ENCODE measurements at regions of chrX and their contacts with region 1.

Region 1: GRCh38 chrX:55187281-55187680 is 32.9 kb upstream of the PAGE5 start:
- DNase-seq: no peak
- H3K4me3 ChIP-seq: no peak overlapping the region
- H3K27ac ChIP-seq: no peak overlapping the region
- H3K4me1 ChIP-seq: no peaks in the 10 kb centered on the region
- H3K27me3 ChIP-seq: peaks cover 0 to 3% of the 10 kb centered on the region in 2 donors
- CTCF ChIP-seq: no peak
- POLR2A ChIP-seq: no peak

Region 2: DNA sequence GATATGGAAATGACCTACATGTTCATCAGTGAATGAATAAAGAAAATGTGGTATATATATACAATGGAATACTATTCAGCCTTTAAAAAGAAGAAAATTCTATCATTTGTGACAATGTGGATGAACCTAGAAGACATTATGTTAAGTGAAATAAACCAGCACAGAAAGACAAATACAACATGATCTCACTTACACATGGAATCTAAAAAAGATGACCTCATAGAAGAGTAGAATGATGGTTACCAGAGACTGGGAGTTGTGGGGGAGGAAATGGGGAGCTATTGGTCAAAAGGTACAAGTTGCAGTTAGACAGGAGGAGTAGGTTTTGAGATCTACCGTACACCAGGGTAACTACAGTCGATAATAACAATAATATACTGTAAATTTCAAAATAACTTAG is 880.9 kb before region 1 on chrX:
- intact Hi-C with region 1: no loop called
- DNase-seq: no peak
- H3K4me3 ChIP-seq: no peak overlapping the region
- H3K27ac ChIP-seq: no peak overlapping the region
- H3K4me1 ChIP-seq: no peaks in the 10 kb centered on the region
- H3K27me3 ChIP-seq: peaks cover 0 to 24% of the 10 kb centered on the region in 2 donors
- CTCF ChIP-seq: no peak
- POLR2A ChIP-seq: no peak

Region 3: GRCh38 chrX:54509400-54509799 is 677.9 kb before region 1 on chrX:
- intact Hi-C with region 1: loop called (anchors 5 kb)
- DNase-seq: no peak
- H3K4me3 ChIP-seq: no peak overlapping the region
- H3K27ac ChIP-seq: no peak overlapping the region
- H3K4me1 ChIP-seq: no peaks in the 10 kb centered on the region
- H3K27me3 ChIP-seq: peaks cover 0 to 15% of the 10 kb centered on the region in 2 donors
- CTCF ChIP-seq: no peak
- POLR2A ChIP-seq: no peak

Region 4: DNA sequence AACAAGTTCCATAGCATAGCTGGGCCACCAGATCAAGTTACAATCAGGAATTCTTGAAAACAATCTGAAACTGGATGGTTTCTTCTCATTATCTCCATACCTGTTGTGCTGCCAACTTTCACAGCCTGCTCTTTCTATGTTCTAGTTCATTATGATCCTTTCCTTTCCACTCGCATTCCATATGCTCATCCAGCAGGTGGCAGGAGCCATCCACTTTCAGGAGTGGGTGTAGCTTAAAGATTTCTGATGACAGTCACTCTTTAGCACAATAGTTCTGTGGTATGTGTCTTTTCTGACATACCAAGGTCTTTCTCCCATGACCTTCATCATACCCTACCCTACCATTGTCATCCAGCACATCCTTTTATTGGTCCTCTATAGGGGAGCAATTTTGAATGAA is 52.1 kb before region 1 on chrX:
- intact Hi-C with region 1: no loop called
- DNase-seq: peak in 1 of 2 donors; percentile 19
- H3K4me3 ChIP-seq: no peak overlapping the region
- H3K27ac ChIP-seq: no peak overlapping the region
- H3K4me1 ChIP-seq: no peaks in the 10 kb centered on the region
- H3K27me3 ChIP-seq: peaks cover 0 to 57% of the 10 kb centered on the region in 2 donors
- CTCF ChIP-seq: peak in 2 of 3 donors; percentile 31 to 52
- POLR2A ChIP-seq: no peak

Region 5: GRCh38 chrX:55758033-55758432 is 570.8 kb after region 1 on chrX:
- intact Hi-C with region 1: no loop called
- DNase-seq: no peak
- H3K4me3 ChIP-seq: no peak overlapping the region
- H3K27ac ChIP-seq: no peak overlapping the region
- H3K4me1 ChIP-seq: no peaks in the 10 kb centered on the region
- H3K27me3 ChIP-seq: peaks cover 0 to 6% of the 10 kb centered on the region in 2 donors
- CTCF ChIP-seq: no peak
- POLR2A ChIP-seq: no peak

Region 6: GRCh38 chrX:56530011-56530410 is 1342.7 kb after region 1 on chrX:
- intact Hi-C with region 1: no loop called
- DNase-seq: no peak
- H3K4me3 ChIP-seq: no peak overlapping the region
- H3K27ac ChIP-seq: no peak overlapping the region
- H3K4me1 ChIP-seq: no peaks in the 10 kb centered on the region
- H3K27me3 ChIP-seq: peaks cover 0 to 22% of the 10 kb centered on the region in 2 donors
- CTCF ChIP-seq: no peak
- POLR2A ChIP-seq: no peak

Measured in breast epithelium (tissue), 4 donors.